ENCODE measurements at regions of chr9 and their contacts with region 1.

Region 1: DNA sequence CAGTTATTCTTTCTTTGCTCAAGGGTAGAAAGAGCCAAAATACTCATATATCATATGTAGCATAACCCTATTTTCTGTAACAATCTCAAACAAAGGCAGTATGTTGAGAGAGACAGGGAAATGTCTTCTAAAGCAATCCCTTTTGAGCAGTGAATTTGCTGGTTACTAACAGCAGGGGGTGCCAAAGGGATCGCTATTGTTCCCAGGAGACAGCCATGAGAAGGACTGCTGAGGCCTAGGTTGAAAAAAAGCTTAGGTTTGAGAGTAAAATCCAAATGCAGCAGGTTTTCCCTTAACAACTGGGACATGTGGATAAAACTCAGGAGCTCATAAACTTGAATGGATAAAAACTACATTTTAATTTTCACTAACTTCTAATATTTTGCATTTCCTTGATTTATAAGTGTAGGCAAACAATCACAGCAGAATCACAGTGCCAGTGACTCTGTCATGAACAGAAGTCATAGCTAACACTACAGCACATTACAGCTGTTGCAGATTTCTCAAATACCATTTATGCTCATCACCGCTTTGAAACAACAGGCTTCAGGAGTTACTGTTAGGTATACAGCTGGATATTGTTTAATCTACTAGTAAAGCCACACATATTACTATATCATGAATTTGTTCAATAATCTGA is 148.4 kb downstream of the MAPKAP1 start:
- DNase-seq: peak; percentile 13 to 73 (median 45)
- ATAC-seq: peak; percentile 74
- H3K4me3 ChIP-seq: no peak overlapping the region
- H3K4me3 Mint-ChIP-seq: no peak overlapping the region
- H3K27ac ChIP-seq: no peak overlapping the region
- H3K27ac Mint-ChIP-seq: no peak overlapping the region
- H3K4me1 ChIP-seq: no peaks in the 10 kb centered on the region
- H3K4me1 Mint-ChIP-seq: peaks cover 11% of the 10 kb centered on the region
- H3K27me3 ChIP-seq: no peaks in the 10 kb centered on the region
- H3K27me3 Mint-ChIP-seq: no peaks in the 10 kb centered on the region
- CTCF ChIP-seq: peak; percentile 76

Region 2: DNA sequence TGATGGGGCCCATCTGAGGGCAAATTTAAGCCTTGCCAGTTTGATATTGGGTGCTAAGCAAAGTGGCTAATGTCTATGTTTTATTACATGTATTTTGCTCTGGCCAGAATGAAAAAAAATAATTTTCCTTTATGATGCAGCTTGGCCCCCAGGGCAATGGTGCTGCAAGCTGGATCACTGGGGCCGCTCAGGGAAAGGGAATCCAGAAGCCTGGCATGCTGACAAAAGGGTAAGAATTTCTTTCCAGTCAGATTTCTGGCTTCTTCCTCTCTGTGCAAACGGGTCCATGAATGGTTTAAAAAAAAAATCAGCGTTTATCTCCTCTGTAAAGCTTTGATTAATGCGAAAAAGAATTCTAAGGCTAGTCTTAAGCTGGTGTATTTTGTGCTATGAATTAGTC is 10.0 kb after region 1 on chr9:
- CTCF ChIA-PET with region 1: interaction called, 11 read pairs
- POLR2A ChIA-PET with region 1: no interaction called
- intact Hi-C with region 1: no loop called
- DNase-seq: no peak
- ATAC-seq: no peak
- H3K4me3 ChIP-seq: no peak overlapping the region
- H3K4me3 Mint-ChIP-seq: no peak overlapping the region
- H3K27ac ChIP-seq: no peak overlapping the region
- H3K27ac Mint-ChIP-seq: no peak overlapping the region
- H3K4me1 ChIP-seq: no peaks in the 10 kb centered on the region
- H3K4me1 Mint-ChIP-seq: peaks cover 1% of the 10 kb centered on the region
- H3K27me3 ChIP-seq: no peaks in the 10 kb centered on the region
- H3K27me3 Mint-ChIP-seq: no peaks in the 10 kb centered on the region
- CTCF ChIP-seq: no peak

Region 3: GRCh38 chr9:125631391-125632085 is 73.0 kb after region 1 on chr9:
- CTCF ChIA-PET with region 1: no interaction called
- POLR2A ChIA-PET with region 1: no interaction called
- intact Hi-C with region 1: loop called (anchors 1 to 2 kb)
- DNase-seq: peak in 3 of 9 experiments; percentile 20 to 53 (median 31)
- ATAC-seq: peak; percentile 69
- H3K4me3 ChIP-seq: no peak overlapping the region
- H3K4me3 Mint-ChIP-seq: no peak overlapping the region
- H3K27ac ChIP-seq: no peak overlapping the region
- H3K27ac Mint-ChIP-seq: no peak overlapping the region
- H3K4me1 ChIP-seq: peaks cover 15% of the 10 kb centered on the region
- H3K4me1 Mint-ChIP-seq: peaks cover 67% of the 10 kb centered on the region
- H3K27me3 ChIP-seq: no peaks in the 10 kb centered on the region
- H3K27me3 Mint-ChIP-seq: no peaks in the 10 kb centered on the region
- CTCF ChIP-seq: peak; percentile 48

Region 4: GRCh38 chr9:126228781-126229444 is 670.3 kb after region 1 on chr9:
- CTCF ChIA-PET with region 1: interaction called, 4 read pairs
- POLR2A ChIA-PET with region 1: no interaction called
- intact Hi-C with region 1: loop called in 1 of 2 experiments (anchors 2 kb)
- DNase-seq: peak; percentile 33 to 79 (median 63)
- ATAC-seq: peak; percentile 91
- H3K4me3 ChIP-seq: no peak overlapping the region
- H3K4me3 Mint-ChIP-seq: no peak overlapping the region
- H3K27ac ChIP-seq: no peak overlapping the region
- H3K27ac Mint-ChIP-seq: no peak overlapping the region
- H3K4me1 ChIP-seq: no peaks in the 10 kb centered on the region
- H3K4me1 Mint-ChIP-seq: peaks cover 2% of the 10 kb centered on the region
- H3K27me3 ChIP-seq: peaks cover 0 to 3% of the 10 kb centered on the region in 2 experiments
- H3K27me3 Mint-ChIP-seq: peaks cover 38% of the 10 kb centered on the region
- CTCF ChIP-seq: peak; percentile 89